Naive thymus-derived CD4-positive, alpha-beta T cell (primary cell): ENCODE measurements at regions of chr14 and their contacts with region 1.

Region 1: DNA sequence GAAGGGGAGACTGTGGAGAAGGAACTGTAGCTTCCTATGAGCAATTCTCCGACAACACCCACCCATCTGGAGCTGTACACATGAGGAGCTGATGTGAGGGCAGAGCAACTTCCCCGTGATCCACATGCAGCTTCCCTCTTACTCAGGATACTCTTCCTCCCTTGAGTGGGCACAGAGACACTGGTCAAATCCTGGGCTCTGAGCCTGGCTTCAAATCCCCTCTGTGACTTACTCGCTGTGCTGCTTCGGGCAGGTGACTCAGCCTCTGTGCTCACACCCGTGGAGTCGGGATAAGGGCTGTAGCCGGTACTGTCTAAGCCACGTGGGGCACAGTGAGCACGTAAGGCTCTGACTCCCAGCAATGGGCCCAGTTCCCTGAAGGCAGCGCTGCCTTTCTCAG is 31.1 kb downstream of the ZFYVE21 start:
- DNase-seq: no peak
- ATAC-seq: no peak
- H3K4me3 ChIP-seq: no peak overlapping the region
- H3K4me3 Mint-ChIP-seq: no peak overlapping the region
- H3K27ac ChIP-seq: no peak overlapping the region
- H3K27ac Mint-ChIP-seq: peak overlapping the region in 2 of 9 donors; percentile 8 to 9
- H3K4me1 ChIP-seq: peaks cover 12 to 22% of the 10 kb centered on the region in 2 donors
- H3K4me1 Mint-ChIP-seq: peaks cover 0 to 21% (median 17%) of the 10 kb centered on the region in 7 donors
- H3K27me3 ChIP-seq: no peaks in the 10 kb centered on the region
- H3K27me3 Mint-ChIP-seq: no peaks in the 10 kb centered on the region

Region 2: DNA sequence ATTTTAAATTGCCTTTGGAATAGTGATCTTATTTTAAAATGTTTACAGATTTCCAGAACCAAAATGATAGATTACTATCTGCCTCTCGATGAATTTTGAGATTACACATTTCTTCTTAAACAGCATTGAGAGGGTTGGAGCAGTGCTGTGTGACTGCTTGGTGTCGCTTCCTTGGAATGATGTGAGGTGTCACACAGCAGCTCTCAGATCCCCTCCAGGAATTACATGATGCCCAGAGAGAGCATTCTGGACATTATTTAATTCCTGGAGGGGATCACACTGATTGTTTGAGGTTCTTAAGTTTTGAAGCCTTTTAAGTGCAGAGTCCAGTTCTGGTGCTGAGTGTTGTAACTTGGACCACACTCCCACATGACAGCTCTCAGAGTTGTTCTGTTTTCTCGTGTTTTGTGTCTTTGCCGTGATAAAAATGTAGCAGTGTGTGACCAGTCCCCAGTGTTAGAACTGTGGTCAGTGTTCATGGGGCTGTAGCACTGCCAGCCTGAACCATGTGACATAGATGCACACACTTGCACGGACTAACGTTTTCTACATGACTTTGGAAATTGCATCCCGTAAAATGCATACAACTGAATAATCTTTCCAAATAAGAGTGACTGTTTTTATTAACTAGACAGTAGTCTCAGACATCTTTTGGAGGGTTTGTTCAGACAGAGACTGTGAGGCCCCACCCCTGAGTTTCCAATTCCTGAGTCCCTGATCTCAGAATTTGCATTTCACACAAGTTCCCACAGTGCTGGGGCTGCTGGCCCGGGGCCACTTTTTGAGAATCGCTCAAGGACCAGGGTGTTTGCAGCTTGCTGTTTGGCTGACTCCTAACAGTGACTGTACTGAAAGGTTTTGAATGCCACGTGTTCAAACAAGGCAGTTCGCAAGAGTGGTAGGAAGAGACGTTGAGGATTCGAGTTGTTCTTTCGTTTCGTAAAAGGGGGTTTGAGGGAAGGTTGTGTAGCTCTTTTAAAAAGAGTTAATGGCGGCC is 57.5 kb before region 1 on chr14:
- CTCF ChIA-PET with region 1: no interaction called
- POLR2A ChIA-PET with region 1: no interaction called
- intact Hi-C with region 1: loop called in 1 of 2 experiments (anchors 10 kb)
- DNase-seq: no peak
- ATAC-seq: no peak
- H3K4me3 ChIP-seq: no peak overlapping the region
- H3K4me3 Mint-ChIP-seq: no peak overlapping the region
- H3K27ac ChIP-seq: no peak overlapping the region
- H3K27ac Mint-ChIP-seq: peak overlapping the region in 1 of 9 donors; percentile 25
- H3K4me1 ChIP-seq: no peaks in the 10 kb centered on the region
- H3K4me1 Mint-ChIP-seq: peaks cover 0 to 4% (median 0%) of the 10 kb centered on the region in 7 donors
- H3K27me3 ChIP-seq: no peaks in the 10 kb centered on the region
- H3K27me3 Mint-ChIP-seq: no peaks in the 10 kb centered on the region

Region 3: DNA sequence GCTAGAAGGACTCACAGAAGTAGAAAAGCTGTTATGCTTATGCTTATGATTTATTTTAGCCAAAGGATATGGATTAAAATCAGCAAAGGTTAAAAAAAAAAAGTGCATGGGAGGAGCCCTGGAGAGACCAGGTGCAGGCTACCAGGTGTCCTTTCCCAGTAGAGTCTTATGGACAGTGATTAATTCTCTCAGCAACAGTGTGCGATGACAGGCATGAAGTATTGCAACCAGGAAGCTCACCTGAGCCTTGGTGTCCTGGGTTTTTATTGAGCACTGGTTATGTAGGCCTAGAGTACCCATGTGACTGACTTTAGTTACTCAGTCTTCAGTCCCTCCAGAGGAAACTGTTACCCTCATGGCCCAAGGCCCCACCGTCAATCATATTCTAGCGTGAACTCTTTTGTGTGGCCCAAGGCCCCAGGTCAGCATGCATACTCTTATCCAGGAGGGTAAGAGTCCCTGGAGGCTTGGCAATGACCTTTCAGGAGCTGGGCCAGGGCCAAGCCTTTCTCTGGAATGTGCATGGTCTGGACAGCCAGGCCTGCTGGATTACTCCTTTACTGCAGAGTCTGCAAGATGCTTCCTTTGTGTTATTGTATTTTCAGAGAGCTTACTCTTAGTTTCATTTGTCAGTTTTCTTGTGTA is 265.2 kb after region 1 on chr14:
- CTCF ChIA-PET with region 1: no interaction called
- POLR2A ChIA-PET with region 1: no interaction called
- intact Hi-C with region 1: no loop called
- DNase-seq: no peak
- ATAC-seq: no peak
- H3K4me3 ChIP-seq: no peak overlapping the region
- H3K4me3 Mint-ChIP-seq: no peak overlapping the region
- H3K27ac ChIP-seq: no peak overlapping the region
- H3K27ac Mint-ChIP-seq: no peak overlapping the region
- H3K4me1 ChIP-seq: no peaks in the 10 kb centered on the region
- H3K4me1 Mint-ChIP-seq: no peaks in the 10 kb centered on the region
- H3K27me3 ChIP-seq: no peaks in the 10 kb centered on the region
- H3K27me3 Mint-ChIP-seq: peaks cover 0 to 11% (median 6%) of the 10 kb centered on the region in 5 donors